CD14-positive monocyte (primary cell): ENCODE measurements at regions of chrX and their contacts with region 1.

Region 1: GRCh38 chrX:107894038-107894437 is 68.4 kb downstream of the MID2 start:
- DNase-seq: peak; percentile 13 to 28 (median 24)
- H3K4me3 ChIP-seq: no peak overlapping the region
- H3K4me3 Mint-ChIP-seq: no peak overlapping the region
- H3K27ac ChIP-seq: no peak overlapping the region
- H3K27ac Mint-ChIP-seq: no peak overlapping the region
- H3K4me1 ChIP-seq: no peaks in the 10 kb centered on the region
- H3K4me1 Mint-ChIP-seq: no peaks in the 10 kb centered on the region
- H3K27me3 ChIP-seq: no peaks in the 10 kb centered on the region
- H3K27me3 Mint-ChIP-seq: peaks cover 1 to 9% (median 4%) of the 10 kb centered on the region in 3 donors
- CTCF ChIP-seq: peak; percentile 57

Region 2: DNA sequence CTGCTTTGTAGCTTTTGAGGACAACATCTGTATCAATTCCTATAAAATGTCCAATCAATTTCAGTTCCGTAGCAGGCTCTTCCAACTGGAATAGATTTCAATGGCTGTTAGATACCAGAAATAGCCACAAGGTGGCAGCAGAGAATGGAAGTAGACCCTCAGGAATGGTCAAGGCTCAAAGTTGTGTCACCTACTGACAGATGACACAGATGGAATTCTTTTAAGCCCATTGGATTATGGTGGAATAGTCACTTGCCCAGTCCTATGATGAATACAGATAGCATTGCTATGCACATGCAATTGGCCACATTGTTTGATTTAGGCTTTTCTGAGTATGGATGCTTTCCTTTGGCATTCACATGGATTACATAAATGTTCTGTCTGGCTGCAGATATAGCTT is 1412.7 kb before region 1 on chrX:
- intact Hi-C with region 1: loop called in 1 of 2 experiments (anchors 10 kb)
- DNase-seq: peak; percentile 2 to 3 (median 3)
- H3K4me3 ChIP-seq: no peak overlapping the region
- H3K4me3 Mint-ChIP-seq: no peak overlapping the region
- H3K27ac ChIP-seq: no peak overlapping the region
- H3K27ac Mint-ChIP-seq: no peak overlapping the region
- H3K4me1 ChIP-seq: no peaks in the 10 kb centered on the region
- H3K4me1 Mint-ChIP-seq: no peaks in the 10 kb centered on the region
- H3K27me3 ChIP-seq: no peaks in the 10 kb centered on the region
- H3K27me3 Mint-ChIP-seq: peaks cover 0 to 7% (median 0%) of the 10 kb centered on the region in 3 donors
- CTCF ChIP-seq: peak; percentile 60

Region 3: DNA sequence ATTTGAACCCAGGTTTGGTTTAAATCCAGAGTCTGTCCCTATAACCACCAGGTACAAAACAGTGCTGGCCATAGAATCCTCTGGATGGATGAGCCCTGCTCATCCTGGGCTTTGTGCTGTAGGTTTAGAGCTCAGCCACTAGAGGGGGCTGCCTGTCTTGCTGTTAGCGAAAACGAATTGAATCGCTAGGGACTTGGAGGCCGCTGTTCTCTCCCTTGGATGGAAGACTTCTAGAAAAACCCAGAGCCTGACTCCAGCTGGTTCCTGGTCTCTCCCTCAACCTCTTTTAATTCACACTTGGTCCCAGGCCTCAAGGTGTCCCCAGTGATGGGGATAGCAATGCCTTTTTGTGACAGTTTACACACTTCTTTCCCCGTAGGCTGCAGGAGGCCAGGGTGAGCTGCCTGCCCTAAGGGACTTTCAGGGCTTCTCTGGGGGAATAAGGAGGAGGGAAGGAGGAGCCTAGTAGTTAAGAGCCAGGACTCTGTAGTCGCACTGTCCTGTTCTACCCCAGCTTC is 999.6 kb before region 1 on chrX:
- intact Hi-C with region 1: loop called (anchors 5 to 10 kb)
- DNase-seq: peak; percentile 9 to 18 (median 12)
- H3K4me3 ChIP-seq: no peak overlapping the region
- H3K4me3 Mint-ChIP-seq: no peak overlapping the region
- H3K27ac ChIP-seq: no peak overlapping the region
- H3K27ac Mint-ChIP-seq: no peak overlapping the region
- H3K4me1 ChIP-seq: no peaks in the 10 kb centered on the region
- H3K4me1 Mint-ChIP-seq: no peaks in the 10 kb centered on the region
- H3K27me3 ChIP-seq: peaks cover 0 to 5% of the 10 kb centered on the region in 2 donors
- H3K27me3 Mint-ChIP-seq: peaks cover 3 to 9% (median 4%) of the 10 kb centered on the region in 3 donors
- CTCF ChIP-seq: peak; percentile 71